Left colon (tissue), 2 donors: ENCODE measurements at regions of chrX and their contacts with region 1.

Region 1: DNA sequence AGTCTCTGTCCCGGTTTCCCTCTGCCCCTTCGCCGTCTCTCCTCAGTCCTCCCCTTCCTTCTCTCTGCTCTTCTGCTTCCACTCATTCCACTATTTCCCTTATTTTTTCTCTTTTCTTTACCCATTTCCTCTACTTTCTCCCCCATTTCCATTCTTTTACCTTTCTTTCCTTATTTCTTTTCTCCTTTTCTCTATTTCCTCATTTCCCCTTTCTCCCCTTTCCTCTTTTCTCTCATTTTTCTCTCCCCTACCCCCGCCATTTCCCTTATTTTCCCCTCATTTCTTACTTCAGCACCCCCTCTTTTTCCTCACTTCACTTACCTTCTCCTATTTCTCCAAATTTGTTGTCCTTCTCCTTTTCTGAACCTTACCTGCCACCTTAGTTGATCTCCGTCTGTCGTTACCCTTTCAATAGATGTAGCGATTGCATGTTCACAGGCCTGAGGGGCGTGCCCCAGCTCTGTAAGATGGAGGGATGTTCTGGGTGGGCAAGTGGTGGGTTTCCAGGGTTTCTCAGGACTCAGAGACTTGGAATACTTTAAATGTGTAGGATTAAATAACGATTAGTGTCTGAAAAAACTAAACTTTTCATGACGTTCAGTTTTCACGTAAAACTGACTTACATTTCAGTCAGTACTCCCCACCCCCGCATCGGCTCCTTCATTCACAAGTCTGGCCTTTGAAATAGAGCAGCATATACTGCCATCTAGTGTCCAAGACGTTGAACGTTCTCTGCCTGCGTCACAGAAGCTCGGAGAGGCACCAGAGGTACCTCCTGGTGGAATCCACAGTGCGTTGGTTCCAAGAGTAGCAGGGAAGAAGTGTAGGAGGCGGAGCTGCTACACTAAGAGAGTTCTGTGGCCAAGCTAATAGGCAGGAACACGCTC is 641 bp upstream of the NCBP2L start:
- DNase-seq: peak; percentile 78 to 80
- ATAC-seq: peak; percentile 74

Region 2: DNA sequence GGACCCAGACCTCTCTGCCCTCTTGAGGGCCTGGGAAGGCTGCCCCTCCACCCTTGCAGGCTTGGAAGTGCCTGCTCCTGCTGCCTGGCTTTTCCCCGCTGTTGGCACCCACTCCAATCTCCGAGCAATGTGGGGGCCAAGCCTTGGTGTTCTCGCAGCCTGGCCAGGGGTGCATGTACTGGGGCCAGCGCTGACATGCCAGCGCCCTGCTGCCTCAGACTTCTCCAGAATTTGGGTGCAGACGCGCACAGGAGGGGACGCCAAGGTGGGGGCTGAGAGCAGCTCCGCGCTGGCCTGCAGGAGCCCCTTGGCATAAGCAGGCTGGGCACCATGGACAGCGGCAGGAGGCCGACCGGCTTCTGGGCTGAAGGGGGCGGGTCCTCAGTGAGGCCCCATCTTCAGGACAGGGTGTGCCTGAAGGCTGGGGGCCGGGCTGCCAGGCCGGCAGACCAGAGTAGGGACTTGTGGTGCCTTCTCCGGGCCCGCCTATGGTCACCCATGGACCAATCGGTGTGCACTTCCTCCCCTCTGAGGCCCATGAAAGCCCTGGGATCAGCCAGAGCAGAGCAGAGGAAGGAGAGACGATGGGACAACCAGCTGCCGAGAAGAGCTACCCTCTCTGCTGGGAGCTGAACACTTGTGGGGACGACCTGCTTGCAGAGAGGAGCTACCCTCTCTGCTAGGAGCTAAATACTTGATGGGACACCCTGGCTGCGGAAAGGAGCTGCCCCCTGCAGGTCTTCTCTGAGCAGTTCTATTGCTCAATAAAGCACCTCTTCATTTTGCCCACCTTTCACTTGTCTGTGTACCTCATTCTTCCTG is 452.2 kb before region 1 on chrX:
- intact Hi-C with region 1: no loop called
- DNase-seq: peak in 1 of 2 donors; percentile 11
- ATAC-seq: peak; percentile 24

Region 3: DNA sequence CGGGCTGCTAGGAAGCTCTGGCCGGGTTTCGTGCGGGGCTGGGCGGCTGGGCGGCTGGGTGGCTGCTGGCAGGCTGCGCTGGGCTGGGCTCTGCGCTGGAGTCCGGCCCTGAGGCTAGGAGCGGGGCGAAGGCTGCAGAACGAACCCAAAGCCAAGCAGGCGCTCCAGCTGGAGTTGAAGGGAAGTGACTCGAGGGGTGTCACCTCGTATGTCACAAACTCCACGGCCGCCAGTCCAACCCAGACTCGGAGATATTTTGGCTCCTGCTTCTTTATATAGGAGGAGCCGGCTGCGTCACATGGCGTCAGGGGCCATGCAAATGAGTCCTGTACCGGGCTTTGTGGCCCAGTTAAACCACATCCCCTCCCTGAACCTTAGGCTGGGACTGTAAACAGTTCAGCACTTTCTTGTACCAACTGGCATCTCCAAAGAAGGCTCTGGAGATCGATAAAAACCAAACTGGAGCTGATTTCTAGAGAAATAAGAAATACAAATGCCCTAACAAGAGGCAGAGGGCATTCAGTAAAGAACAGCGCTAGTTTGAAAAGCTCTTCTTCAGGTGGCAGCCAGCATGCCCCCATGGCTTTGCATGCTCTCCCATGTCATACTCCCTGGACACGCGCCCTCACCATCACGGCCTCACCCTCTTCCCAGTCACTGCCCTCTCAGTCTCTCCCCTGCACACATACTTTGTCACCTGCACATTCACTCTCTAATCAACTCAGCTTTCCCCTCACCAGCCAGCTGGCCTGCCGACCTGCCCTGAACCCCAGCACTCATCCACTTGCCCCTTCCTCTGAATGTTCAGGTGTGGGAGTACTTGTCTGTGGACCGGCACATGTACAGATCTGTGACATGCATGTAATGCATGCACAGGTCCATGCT is 59.8 kb before region 1 on chrX:
- intact Hi-C with region 1: loop called in 1 of 2 experiments (anchors 5 kb)
- DNase-seq: peak; percentile 82 to 90
- ATAC-seq: peak; percentile 82